HAP-1 (cell line): ENCODE measurements at regions of chr9 and their contacts with region 1.

Region 1: DNA sequence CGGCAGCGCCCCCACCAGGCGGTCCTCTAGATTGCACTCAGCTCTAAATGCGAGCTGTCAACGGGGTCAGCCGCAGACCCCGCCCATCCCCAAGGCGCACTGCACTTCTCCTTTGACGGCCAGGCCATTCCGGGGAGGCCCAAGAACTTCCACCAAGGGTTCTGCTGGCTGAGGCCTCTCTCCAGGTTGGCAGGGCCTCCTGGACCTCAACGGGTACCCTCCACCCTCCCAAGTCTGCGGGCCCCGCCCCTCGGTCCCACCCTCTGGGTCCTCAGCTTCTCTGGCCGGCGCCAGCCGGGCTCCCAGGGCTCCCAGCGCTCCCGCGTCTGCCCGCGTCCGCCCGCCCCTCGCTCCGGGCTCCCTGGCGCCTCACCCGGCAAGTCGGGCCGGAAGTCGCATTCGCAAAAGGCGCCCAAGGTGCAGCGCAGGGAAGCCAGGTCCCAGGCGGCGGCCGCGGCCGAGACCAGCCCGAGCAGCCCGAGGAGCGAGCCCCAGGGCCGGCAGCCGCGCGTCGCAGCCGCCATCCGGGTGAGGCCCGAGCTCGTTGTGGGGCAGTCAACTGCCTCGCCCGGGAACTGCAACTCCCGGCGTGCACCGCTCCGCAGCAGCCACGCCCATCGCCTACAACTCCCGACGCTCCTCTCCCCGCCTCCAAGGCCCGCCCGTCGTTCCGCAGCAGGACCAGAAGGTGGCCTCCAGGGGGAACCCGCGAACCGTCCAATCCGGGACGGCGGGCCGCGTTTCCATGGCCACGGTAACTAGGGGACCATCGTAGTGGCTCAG is at the start of gene TOR2A:
- DNase-seq: peak; percentile 96 to 99
- H3K4me3 ChIP-seq: peak within 1 kb of the TSS; percentile 57
- H3K4me1 ChIP-seq: peaks cover 8% of the 10 kb centered on the region
- H3K27me3 ChIP-seq: no peaks in the 10 kb centered on the region

Region 2: GRCh38 chr9:127676636-127677035 is 58.3 kb before region 1 on chr9:
- in situ Hi-C with region 1: no loop called
- DNase-seq: no peak
- H3K4me3 ChIP-seq: no peak overlapping the region
- H3K4me1 ChIP-seq: no peaks in the 10 kb centered on the region
- H3K27me3 ChIP-seq: no peaks in the 10 kb centered on the region

Region 3: DNA sequence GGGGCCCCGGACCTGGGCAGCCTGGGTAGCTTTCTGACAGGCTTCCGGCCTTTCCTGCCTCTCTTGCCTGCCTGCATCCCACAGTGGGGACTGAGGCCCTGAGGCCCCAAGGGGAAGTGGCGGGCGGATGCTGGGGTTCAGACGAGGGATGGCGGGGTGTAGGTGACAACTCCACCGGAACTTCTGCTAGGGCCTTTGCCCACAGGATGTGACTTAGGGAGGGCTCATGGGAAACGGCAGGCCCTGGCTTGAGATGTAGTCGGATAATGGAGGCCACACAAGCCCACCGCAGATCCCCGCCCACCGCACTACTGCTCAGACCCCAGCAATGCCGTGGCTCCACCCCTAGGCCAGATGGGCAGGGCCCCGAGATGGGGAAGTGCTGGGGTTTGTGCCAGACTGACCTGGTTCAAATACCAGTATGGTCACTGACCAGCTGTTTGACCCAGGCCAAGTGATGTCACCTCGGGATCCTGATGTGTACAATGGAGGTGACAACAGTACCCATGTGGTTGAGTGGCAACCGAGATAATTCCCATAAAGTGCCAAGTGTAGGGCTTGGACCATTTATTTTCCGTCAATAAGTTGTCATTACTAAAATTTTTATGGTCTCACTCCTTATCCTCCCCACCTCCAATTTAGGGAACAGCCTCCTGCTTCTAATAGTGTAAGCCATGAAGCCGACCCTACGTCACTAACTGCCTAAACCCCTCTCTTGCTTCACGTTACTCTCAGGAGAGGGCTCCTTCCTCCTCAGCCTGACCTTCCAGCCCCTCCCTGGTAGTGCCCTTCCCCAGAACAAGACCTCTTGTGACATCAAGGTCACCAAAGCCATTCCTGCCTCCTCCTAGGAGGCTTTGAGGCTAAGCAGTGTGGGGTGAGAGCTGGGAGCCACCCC is 48.4 kb after region 1 on chr9:
- in situ Hi-C with region 1: loop called (anchors 5 kb)
- DNase-seq: no peak
- H3K4me3 ChIP-seq: no peak overlapping the region
- H3K4me1 ChIP-seq: peaks cover 5% of the 10 kb centered on the region
- H3K27me3 ChIP-seq: no peaks in the 10 kb centered on the region

Region 4: DNA sequence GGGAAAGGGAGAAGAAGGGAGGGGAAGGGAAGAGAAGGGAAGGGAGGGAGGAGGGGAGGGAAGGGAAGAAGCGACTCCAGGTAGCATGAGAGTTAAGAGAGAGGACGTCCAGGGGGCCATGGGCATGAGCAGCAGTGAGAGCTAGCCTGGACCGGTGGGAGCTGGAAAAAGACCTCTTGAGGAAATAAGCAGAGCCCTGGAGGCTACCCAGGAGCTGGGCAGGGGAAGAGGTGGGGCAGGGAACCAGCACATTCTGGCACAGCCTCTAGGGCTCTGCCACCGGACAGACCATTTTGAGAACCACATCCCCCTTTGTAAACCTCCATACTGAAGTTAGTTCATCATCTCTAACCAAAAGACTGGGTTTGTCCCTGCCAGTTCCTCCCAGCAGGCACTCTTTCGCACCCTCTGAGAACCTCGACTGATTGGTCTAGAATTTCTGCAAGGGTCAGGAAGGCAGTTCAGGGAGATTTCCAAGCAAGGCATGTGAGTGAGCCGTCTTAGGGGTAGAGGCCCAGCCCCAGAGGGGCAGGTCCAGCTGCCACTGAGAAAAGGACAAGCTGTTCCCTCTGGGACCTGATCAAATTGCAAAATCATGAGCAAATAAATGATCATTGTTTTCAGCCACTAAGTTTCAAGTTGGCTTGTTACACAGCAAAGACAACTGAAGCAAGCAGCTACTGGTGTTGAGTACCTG is 320.6 kb after region 1 on chr9:
- in situ Hi-C with region 1: no loop called
- DNase-seq: no peak
- H3K4me3 ChIP-seq: no peak overlapping the region
- H3K4me1 ChIP-seq: no peaks in the 10 kb centered on the region
- H3K27me3 ChIP-seq: no peaks in the 10 kb centered on the region